HAP-1 (cell line): ENCODE measurements at regions of chr19 and their contacts with region 1.

Region 1: DNA sequence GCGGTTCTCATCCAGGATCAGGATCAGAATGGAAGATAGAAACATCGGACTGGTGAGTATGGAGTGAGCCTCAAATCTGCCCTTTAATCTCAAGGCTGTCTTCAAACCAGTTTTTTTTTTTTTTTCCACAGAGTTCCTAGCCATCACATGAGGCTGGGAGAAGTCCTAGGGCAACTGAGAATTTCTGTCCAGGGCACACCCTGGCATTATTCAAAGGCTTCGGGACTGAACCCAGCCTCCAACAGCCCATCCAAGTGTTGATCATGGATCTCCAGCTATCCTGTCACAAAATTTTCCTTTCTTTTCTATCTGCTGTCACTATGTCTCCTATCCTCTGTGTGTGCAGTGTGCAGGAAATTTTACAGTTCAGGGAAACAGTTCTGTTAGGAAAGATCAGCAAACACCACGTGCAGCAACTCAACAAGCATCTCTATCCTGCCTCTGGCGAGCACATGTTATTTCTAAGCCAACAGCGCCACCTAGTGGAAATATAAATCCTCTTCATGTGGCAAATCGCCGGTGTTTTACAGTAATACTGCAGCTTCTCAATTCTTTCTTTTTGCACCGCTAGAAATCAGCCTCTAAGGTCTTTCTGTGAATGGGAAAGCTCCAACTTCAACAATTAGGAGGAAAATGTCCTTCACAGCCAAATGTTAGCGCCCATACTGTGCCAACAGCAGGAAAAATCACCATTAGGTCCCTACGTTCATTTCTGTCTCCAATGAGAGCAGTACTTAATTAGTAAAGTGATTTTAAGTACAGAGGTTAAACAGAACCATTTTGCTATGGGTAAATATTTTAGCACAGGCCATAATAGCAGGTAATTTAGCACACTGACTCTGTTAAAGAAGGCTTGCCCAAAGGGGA is 21.4 kb upstream of the ZNF181 start:
- DNase-seq: peak; percentile 73 to 74
- H3K4me3 ChIP-seq: no peak overlapping the region
- H3K4me1 ChIP-seq: 0 out of 2 replicates have a peak, but pooled peaks cover 3% of the 10 kb centered on the region
- H3K27me3 ChIP-seq: 0 out of 2 replicates have a peak, but pooled peaks cover under 1% of the 10 kb centered on the region

Region 2: GRCh38 chr19:33430674-33431277 is 1281.9 kb before region 1 on chr19:
- in situ Hi-C with region 1: loop called (anchors 25 kb)
- DNase-seq: peak; percentile 63 to 86
- H3K4me3 ChIP-seq: no peak overlapping the region
- H3K4me1 ChIP-seq: no peaks in the 10 kb centered on the region
- H3K27me3 ChIP-seq: no peaks in the 10 kb centered on the region

Region 3: DNA sequence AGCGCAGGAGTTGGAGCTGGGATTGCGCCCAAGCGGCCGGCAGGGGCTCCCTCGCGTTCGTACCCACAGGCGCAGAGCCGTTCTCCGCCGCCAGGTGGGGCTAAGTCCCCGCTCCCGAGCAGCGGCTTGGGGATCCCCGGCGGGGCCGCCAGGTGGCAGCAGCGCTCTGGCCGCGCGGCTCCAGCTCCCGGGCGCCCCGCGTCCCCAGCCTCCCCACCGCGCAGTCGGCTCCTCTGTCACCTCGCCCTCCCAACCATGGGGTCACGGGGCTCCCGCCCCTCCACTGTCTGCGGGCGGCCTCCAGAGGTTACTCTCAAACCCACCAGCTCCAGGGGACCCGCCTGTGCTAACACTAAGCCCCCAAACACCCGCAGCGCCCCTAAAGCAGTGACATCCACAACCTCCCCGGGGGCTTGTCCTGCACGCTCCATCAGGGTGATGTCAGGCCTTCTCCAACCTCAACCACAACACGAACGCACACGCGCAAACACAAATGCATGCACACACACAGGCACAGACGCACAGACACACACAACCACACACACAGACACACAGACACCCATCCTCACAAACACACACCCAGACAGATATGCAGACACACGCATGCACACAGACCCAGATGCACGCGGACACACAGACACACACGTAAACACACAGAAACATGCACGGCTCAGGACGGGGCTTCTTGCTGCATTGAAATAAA is 934.4 kb before region 1 on chr19:
- in situ Hi-C with region 1: loop called (anchors 10 kb)
- DNase-seq: peak; percentile 65 to 90
- H3K4me3 ChIP-seq: no peak overlapping the region
- H3K4me1 ChIP-seq: peaks cover 3% of the 10 kb centered on the region
- H3K27me3 ChIP-seq: no peaks in the 10 kb centered on the region

Region 4: DNA sequence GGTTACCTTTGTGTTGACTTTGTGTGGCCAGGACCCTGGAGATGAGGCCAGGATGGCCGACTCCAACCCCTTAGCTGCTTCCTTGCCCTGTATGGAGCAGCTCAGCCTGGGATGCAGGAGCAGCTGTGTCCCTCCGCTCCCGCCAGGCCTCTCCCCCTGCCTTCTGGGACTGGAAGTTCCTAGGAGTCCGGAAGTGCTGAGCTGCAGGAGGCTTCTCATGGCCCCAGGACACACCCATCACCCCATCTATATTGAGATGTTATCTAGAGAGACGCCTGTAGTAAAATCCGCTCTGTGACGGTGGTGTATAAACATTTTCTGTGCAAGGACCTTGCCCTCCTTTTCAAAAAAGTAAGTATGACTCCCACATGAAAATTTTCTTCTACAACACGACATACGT is 204.1 kb before region 1 on chr19:
- in situ Hi-C with region 1: loop called (anchors 5 kb)
- DNase-seq: no peak
- H3K4me3 ChIP-seq: no peak overlapping the region
- H3K4me1 ChIP-seq: no peaks in the 10 kb centered on the region
- H3K27me3 ChIP-seq: no peaks in the 10 kb centered on the region

Region 5: GRCh38 chr19:34556488-34556887 is 156.1 kb before region 1 on chr19:
- in situ Hi-C with region 1: loop called (anchors 10 kb)
- DNase-seq: peak; percentile 12 to 69
- H3K4me3 ChIP-seq: no peak overlapping the region
- H3K4me1 ChIP-seq: no peaks in the 10 kb centered on the region
- H3K27me3 ChIP-seq: no peaks in the 10 kb centered on the region

Region 6: GRCh38 chr19:34639491-34640085 is 73.0 kb before region 1 on chr19:
- in situ Hi-C with region 1: loop called (anchors 5 kb)
- DNase-seq: peak; percentile 49 to 65
- H3K4me3 ChIP-seq: no peak overlapping the region
- H3K4me1 ChIP-seq: no peaks in the 10 kb centered on the region
- H3K27me3 ChIP-seq: no peaks in the 10 kb centered on the region

Region 7: GRCh38 chr19:34808566-34808965 is 95.9 kb after region 1 on chr19:
- in situ Hi-C with region 1: no loop called
- DNase-seq: no peak
- H3K4me3 ChIP-seq: no peak overlapping the region
- H3K4me1 ChIP-seq: no peaks in the 10 kb centered on the region
- H3K27me3 ChIP-seq: no peaks in the 10 kb centered on the region